ENCODE measurements at regions of chr1 and their contacts with region 1.

Region 1: GRCh38 chr1:17419626-17420328 is 19.7 kb downstream of the RCC2 start:
- DNase-seq: peak; percentile 82
- ATAC-seq: peak; percentile 94
- H3K4me3 ChIP-seq: no peak overlapping the region
- H3K27ac ChIP-seq: no peak overlapping the region
- H3K4me1 ChIP-seq: peaks cover 5% of the 10 kb centered on the region
- H3K27me3 ChIP-seq: no peaks in the 10 kb centered on the region
- CTCF ChIP-seq: peak; percentile 99

Region 2: GRCh38 chr1:17141441-17142197 is 278.2 kb before region 1 on chr1:
- intact Hi-C with region 1: no loop called
- DNase-seq: no peak
- ATAC-seq: peak; percentile 23
- H3K4me3 ChIP-seq: no peak overlapping the region
- H3K27ac ChIP-seq: no peak overlapping the region
- H3K4me1 ChIP-seq: no peaks in the 10 kb centered on the region
- H3K27me3 ChIP-seq: no peaks in the 10 kb centered on the region
- CTCF ChIP-seq: no peak

Region 3: GRCh38 chr1:17475729-17476128 is 56.0 kb after region 1 on chr1:
- intact Hi-C with region 1: loop called (anchors 10 kb)
- DNase-seq: no peak
- ATAC-seq: no peak
- H3K4me3 ChIP-seq: no peak overlapping the region
- H3K27ac ChIP-seq: no peak overlapping the region
- H3K4me1 ChIP-seq: no peaks in the 10 kb centered on the region
- H3K27me3 ChIP-seq: no peaks in the 10 kb centered on the region
- CTCF ChIP-seq: no peak